ENCODE measurements at regions of chr22 and their contacts with region 1.

Region 1: GRCh38 chr22:38872172-38872830 is at the start of gene CBX6:
- DNase-seq: peak; percentile 78
- H3K4me3 Mint-ChIP-seq: peak within 1 kb of the TSS; percentile 82
- H3K27ac Mint-ChIP-seq: peak within 1 kb of the TSS; percentile 35
- H3K4me1 Mint-ChIP-seq: peaks cover 21% of the 10 kb centered on the region
- H3K27me3 Mint-ChIP-seq: peaks cover 52% of the 10 kb centered on the region
- CTCF ChIP-seq: no peak
- total RNA-seq, gene CBX6: 22.9 and 42.1 TPM in 2 replicates

Region 2: GRCh38 chr22:38766076-38766777 is 106.1 kb before region 1 on chr22:
- CTCF ChIA-PET with region 1: interaction called, 30 read pairs
- POLR2A ChIA-PET with region 1: interaction called, 5 read pairs
- intact Hi-C with region 1: loop called (anchors 1 kb)
- DNase-seq: peak; percentile 89
- H3K4me3 Mint-ChIP-seq: no peak overlapping the region
- H3K27ac Mint-ChIP-seq: no peak overlapping the region
- H3K4me1 Mint-ChIP-seq: peaks cover 6% of the 10 kb centered on the region
- H3K27me3 Mint-ChIP-seq: no peaks in the 10 kb centered on the region
- CTCF ChIP-seq: peak; percentile 91

Region 3: GRCh38 chr22:38923463-38924346 is 51.4 kb after region 1 on chr22:
- CTCF ChIA-PET with region 1: interaction called, 12 read pairs
- POLR2A ChIA-PET with region 1: interaction called, 7 read pairs
- intact Hi-C with region 1: loop called (anchors 5 kb)
- DNase-seq: peak; percentile 62
- H3K4me3 Mint-ChIP-seq: peak overlapping the region; percentile 66
- H3K27ac Mint-ChIP-seq: no peak overlapping the region
- H3K4me1 Mint-ChIP-seq: peaks cover 14% of the 10 kb centered on the region
- H3K27me3 Mint-ChIP-seq: peaks cover 16% of the 10 kb centered on the region
- CTCF ChIP-seq: no peak

Region 4: GRCh38 chr22:38981992-38982927 is 110.0 kb after region 1 on chr22 and contains the start of gene APOBEC3B:
- CTCF ChIA-PET with region 1: interaction called, 11 read pairs
- POLR2A ChIA-PET with region 1: interaction called, 6 read pairs
- intact Hi-C with region 1: loop called (anchors 5 kb)
- DNase-seq: peak; percentile 98
- H3K4me3 Mint-ChIP-seq: peak within 1 kb of the TSS; percentile 73
- H3K27ac Mint-ChIP-seq: peak within 1 kb of the TSS; percentile 70
- H3K4me1 Mint-ChIP-seq: peaks cover 15% of the 10 kb centered on the region
- H3K27me3 Mint-ChIP-seq: peaks cover 25% of the 10 kb centered on the region
- CTCF ChIP-seq: no peak
- total RNA-seq, gene APOBEC3B: 1.0 and 1.1 TPM in 2 replicates

Region 5: GRCh38 chr22:39013942-39014722 is 141.8 kb after region 1 on chr22 and contains the start of gene APOBEC3C:
- CTCF ChIA-PET with region 1: interaction called, 16 read pairs
- POLR2A ChIA-PET with region 1: interaction called, 5 read pairs
- intact Hi-C with region 1: no loop called
- DNase-seq: peak; percentile 88
- H3K4me3 Mint-ChIP-seq: peak within 1 kb of the TSS; percentile 94
- H3K27ac Mint-ChIP-seq: peak within 1 kb of the TSS; percentile 96
- H3K4me1 Mint-ChIP-seq: peaks cover 5% of the 10 kb centered on the region
- H3K27me3 Mint-ChIP-seq: no peaks in the 10 kb centered on the region
- CTCF ChIP-seq: no peak
- total RNA-seq, gene APOBEC3C: 24.8 and 30.1 TPM in 2 replicates

Region 6: GRCh38 chr22:39123751-39124601 is 251.7 kb after region 1 on chr22:
- CTCF ChIA-PET with region 1: interaction called, 29 read pairs
- POLR2A ChIA-PET with region 1: interaction called, 6 read pairs
- intact Hi-C with region 1: loop called (anchors 2 kb)
- DNase-seq: no peak
- H3K4me3 Mint-ChIP-seq: no peak overlapping the region
- H3K27ac Mint-ChIP-seq: no peak overlapping the region
- H3K4me1 Mint-ChIP-seq: no peaks in the 10 kb centered on the region
- H3K27me3 Mint-ChIP-seq: no peaks in the 10 kb centered on the region
- CTCF ChIP-seq: no peak

Region 7: GRCh38 chr22:39388261-39389011 is 516.1 kb after region 1 on chr22:
- CTCF ChIA-PET with region 1: no interaction called
- POLR2A ChIA-PET with region 1: no interaction called
- intact Hi-C with region 1: no loop called
- DNase-seq: no peak
- H3K4me3 Mint-ChIP-seq: no peak overlapping the region
- H3K27ac Mint-ChIP-seq: no peak overlapping the region
- H3K4me1 Mint-ChIP-seq: no peaks in the 10 kb centered on the region
- H3K27me3 Mint-ChIP-seq: no peaks in the 10 kb centered on the region
- CTCF ChIP-seq: no peak

Measured in MCF 10A (cell line).